ENCODE measurements at regions of chr3 and their contacts with region 1.

Region 1: GRCh38 chr3:196115678-196116083 is 33.8 kb upstream of the TFRC start:
- DNase-seq: no peak
- ATAC-seq: peak; percentile 65
- H3K4me3 Mint-ChIP-seq: no peak overlapping the region
- H3K27ac Mint-ChIP-seq: no peak overlapping the region
- H3K4me1 Mint-ChIP-seq: peaks cover 49% of the 10 kb centered on the region
- H3K27me3 Mint-ChIP-seq: no peaks in the 10 kb centered on the region
- CTCF ChIP-seq: no peak

Region 2: GRCh38 chr3:196039358-196039757 is 76.3 kb before region 1 on chr3:
- CTCF ChIA-PET with region 1: no interaction called
- POLR2A ChIA-PET with region 1: no interaction called
- intact Hi-C with region 1: no loop called
- DNase-seq: no peak
- ATAC-seq: no peak
- H3K4me3 Mint-ChIP-seq: no peak overlapping the region
- H3K27ac Mint-ChIP-seq: no peak overlapping the region
- H3K4me1 Mint-ChIP-seq: no peaks in the 10 kb centered on the region
- H3K27me3 Mint-ChIP-seq: no peaks in the 10 kb centered on the region
- CTCF ChIP-seq: no peak

Region 3: GRCh38 chr3:196096382-196096953 is 19.2 kb before region 1 on chr3:
- CTCF ChIA-PET with region 1: no interaction called
- POLR2A ChIA-PET with region 1: interaction called, 7 read pairs
- intact Hi-C with region 1: loop called (anchors 2 kb)
- DNase-seq: peak; percentile 18
- ATAC-seq: peak; percentile 82
- H3K4me3 Mint-ChIP-seq: peak overlapping the region; percentile 61
- H3K27ac Mint-ChIP-seq: peak overlapping the region; percentile 89
- H3K4me1 Mint-ChIP-seq: peaks cover 42% of the 10 kb centered on the region
- H3K27me3 Mint-ChIP-seq: no peaks in the 10 kb centered on the region
- CTCF ChIP-seq: no peak

Region 4: DNA sequence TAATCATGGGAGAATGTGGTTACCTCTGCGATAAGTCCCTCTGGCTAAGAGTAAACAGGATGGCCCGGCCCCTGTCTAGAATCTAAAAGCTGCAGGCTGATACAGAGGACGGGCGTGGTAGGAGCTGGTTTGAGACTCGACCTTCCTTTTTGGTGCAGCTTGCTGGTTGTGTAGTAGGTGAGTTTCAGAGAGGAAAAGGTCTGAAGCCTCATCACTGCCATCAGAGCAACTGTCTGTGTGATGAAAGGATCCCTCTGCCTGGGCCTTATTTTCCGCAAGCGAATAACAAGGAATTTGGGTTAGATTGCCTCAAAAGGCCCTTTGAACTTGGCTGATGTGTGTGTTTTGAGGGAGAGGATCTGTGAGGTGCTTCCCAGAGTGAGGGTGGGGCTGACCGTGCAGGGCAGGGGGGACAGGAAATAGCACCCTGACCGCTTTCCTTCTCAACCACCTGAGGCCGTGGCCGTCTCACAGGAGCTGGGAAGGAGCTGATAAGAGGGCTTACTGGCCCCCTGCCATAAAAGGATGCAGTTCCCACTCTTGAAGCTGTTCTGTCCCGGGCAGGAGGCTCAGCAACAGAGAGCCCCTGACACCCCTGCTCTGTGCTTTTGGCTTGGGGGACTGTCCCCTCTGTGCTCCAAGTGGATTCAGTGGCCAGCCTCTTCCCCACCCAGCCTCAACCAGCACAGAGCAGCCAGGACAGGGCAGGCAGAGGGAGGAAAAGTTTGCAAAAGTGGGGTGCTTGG is 11.8 kb after region 1 on chr3:
- CTCF ChIA-PET with region 1: no interaction called
- POLR2A ChIA-PET with region 1: interaction called, 3 read pairs
- intact Hi-C with region 1: loop called (anchors 2 kb)
- DNase-seq: no peak
- ATAC-seq: no peak
- H3K4me3 Mint-ChIP-seq: no peak overlapping the region
- H3K27ac Mint-ChIP-seq: no peak overlapping the region
- H3K4me1 Mint-ChIP-seq: peaks cover 19% of the 10 kb centered on the region
- H3K27me3 Mint-ChIP-seq: no peaks in the 10 kb centered on the region
- CTCF ChIP-seq: no peak

Region 5: GRCh38 chr3:196179380-196180308 is 64.0 kb after region 1 on chr3:
- CTCF ChIA-PET with region 1: interaction called, 3 read pairs
- POLR2A ChIA-PET with region 1: interaction called, 14 read pairs
- intact Hi-C with region 1: loop called (anchors 2 kb)
- DNase-seq: peak; percentile 73
- ATAC-seq: peak; percentile 80
- H3K4me3 Mint-ChIP-seq: peak overlapping the region; percentile 66
- H3K27ac Mint-ChIP-seq: peak overlapping the region; percentile 97
- H3K4me1 Mint-ChIP-seq: peaks cover 48% of the 10 kb centered on the region
- H3K27me3 Mint-ChIP-seq: no peaks in the 10 kb centered on the region
- CTCF ChIP-seq: no peak

Region 6: DNA sequence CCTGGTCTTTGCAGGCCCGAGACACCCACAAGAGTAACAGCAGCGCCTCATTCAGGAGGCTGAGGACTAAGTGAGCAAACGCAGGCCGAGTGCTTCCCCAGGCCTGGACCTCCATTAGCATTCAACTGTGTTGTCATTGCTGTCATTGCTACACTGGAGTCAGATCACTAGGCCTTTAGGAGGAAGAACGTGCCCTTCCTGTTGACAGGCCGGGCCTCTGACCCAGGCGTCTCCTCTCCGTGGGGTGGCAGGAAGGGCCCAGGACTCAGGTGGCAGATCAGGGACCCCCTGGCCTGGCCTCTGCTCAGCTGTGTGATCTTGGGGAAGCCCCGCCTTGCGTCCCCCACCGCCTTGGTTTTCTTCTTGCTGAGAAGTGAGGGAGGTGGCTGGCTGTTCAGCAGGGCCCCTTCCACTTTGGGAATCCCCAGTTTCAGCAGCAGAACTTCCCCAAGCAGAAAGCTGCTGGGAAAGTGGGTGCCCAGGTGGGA is 76.4 kb after region 1 on chr3:
- CTCF ChIA-PET with region 1: interaction called, 4 read pairs
- POLR2A ChIA-PET with region 1: interaction called, 4 read pairs
- intact Hi-C with region 1: loop called (anchors 1 kb)
- DNase-seq: peak; percentile 68
- ATAC-seq: peak; percentile 73
- H3K4me3 Mint-ChIP-seq: peak overlapping the region; percentile 70
- H3K27ac Mint-ChIP-seq: peak overlapping the region; percentile 98
- H3K4me1 Mint-ChIP-seq: peaks cover 62% of the 10 kb centered on the region
- H3K27me3 Mint-ChIP-seq: no peaks in the 10 kb centered on the region
- CTCF ChIP-seq: no peak